ENCODE measurements at regions of chr19 and their contacts with region 1.

Region 1: GRCh38 chr19:35135389-35135909 is 590 bp upstream of the LGI4 start:
- DNase-seq: peak; percentile 73
- H3K4me3 Mint-ChIP-seq: no peak overlapping the region
- H3K27ac Mint-ChIP-seq: no peak overlapping the region
- H3K4me1 Mint-ChIP-seq: peaks cover 6% of the 10 kb centered on the region
- H3K27me3 Mint-ChIP-seq: peaks cover 4% of the 10 kb centered on the region
- CTCF ChIP-seq: peak; percentile 79

Region 2: GRCh38 chr19:35090506-35091237 is 44.8 kb before region 1 on chr19:
- CTCF ChIA-PET with region 1: interaction called, 24 read pairs
- POLR2A ChIA-PET with region 1: interaction called, 4 read pairs
- intact Hi-C with region 1: no loop called
- DNase-seq: peak; percentile 73
- H3K4me3 Mint-ChIP-seq: no peak overlapping the region
- H3K27ac Mint-ChIP-seq: no peak overlapping the region
- H3K4me1 Mint-ChIP-seq: peaks cover 10% of the 10 kb centered on the region
- H3K27me3 Mint-ChIP-seq: no peaks in the 10 kb centered on the region
- CTCF ChIP-seq: peak; percentile 46

Region 3: GRCh38 chr19:35107546-35107945 is 27.9 kb before region 1 on chr19:
- CTCF ChIA-PET with region 1: interaction called, 19 read pairs
- POLR2A ChIA-PET with region 1: no interaction called
- intact Hi-C with region 1: no loop called
- DNase-seq: peak; percentile 86
- H3K4me3 Mint-ChIP-seq: peak overlapping the region; percentile 37
- H3K27ac Mint-ChIP-seq: peak overlapping the region; percentile 71
- H3K4me1 Mint-ChIP-seq: peaks cover 21% of the 10 kb centered on the region
- H3K27me3 Mint-ChIP-seq: no peaks in the 10 kb centered on the region
- CTCF ChIP-seq: no peak

Region 4: DNA sequence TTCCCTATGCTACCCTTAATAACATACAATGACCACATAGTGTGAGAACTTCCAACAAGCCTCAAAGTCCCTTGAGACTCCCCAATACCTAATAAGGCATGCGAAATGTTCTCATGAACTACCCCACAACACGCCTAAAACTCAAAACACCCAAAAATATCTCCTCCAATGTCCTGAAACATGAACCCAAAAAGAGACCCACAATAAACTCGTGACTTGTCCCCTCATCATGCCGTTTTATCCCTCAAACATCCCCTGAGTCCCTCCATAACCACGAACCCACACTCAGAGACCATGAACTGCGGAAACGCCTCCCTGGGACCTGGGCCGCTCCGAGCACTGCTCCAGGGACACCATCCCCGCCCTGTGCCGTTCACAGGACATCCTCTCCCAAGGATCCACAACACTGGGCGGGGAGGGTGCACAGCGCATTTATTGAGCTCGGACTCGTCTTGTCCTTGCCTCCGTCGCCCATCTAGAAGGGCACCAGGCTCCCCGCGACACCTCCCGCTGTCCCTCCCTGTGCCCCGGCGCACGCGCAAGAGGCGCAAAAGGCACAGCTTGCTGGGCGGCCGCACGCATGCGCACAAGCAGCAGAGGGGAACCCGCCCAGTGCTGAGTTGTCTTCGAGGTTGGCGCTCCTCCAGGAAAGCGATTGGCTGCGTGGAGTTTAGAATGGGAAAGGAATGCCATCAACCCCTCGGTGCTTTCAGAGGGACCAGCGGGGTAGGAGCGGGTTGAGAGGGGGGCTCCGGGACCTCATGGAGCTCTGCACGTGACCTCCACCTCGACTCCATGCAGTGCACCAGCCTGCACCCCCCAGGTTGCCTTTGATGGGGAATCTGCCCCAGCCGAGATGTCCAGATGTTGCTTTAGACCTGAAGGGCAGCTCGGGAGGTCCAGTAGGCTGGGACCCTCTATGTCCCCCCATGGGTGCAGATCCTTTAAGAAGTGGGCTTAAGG is 11.1 kb before region 1 on chr19:
- CTCF ChIA-PET with region 1: interaction called, 91 read pairs
- POLR2A ChIA-PET with region 1: interaction called, 27 read pairs
- intact Hi-C with region 1: no loop called
- DNase-seq: peak; percentile 97
- H3K4me3 Mint-ChIP-seq: peak overlapping the region; percentile 89
- H3K27ac Mint-ChIP-seq: peak overlapping the region; percentile 73
- H3K4me1 Mint-ChIP-seq: peaks cover 50% of the 10 kb centered on the region
- H3K27me3 Mint-ChIP-seq: no peaks in the 10 kb centered on the region
- CTCF ChIP-seq: no peak

Measured in MCF 10A (cell line).